ENCODE measurements at regions of chr18 and their contacts with region 1.

Region 1: GRCh38 chr18:38654946-38655345 is 1089.3 kb upstream of the CELF4 start:
- DNase-seq: no peak
- H3K4me3 ChIP-seq: no peak overlapping the region
- H3K27ac ChIP-seq: no peak overlapping the region
- H3K4me1 ChIP-seq: no peaks in the 10 kb centered on the region
- H3K27me3 ChIP-seq: no peaks in the 10 kb centered on the region
- CTCF ChIP-seq: no peak
- EP300 ChIP-seq: no peak
- POLR2A ChIP-seq: no peak

Region 2: GRCh38 chr18:38241736-38242135 is 413.2 kb before region 1 on chr18:
- in situ Hi-C with region 1: no loop called
- intact Hi-C with region 1: no loop called
- DNase-seq: no peak
- H3K4me3 ChIP-seq: no peak overlapping the region
- H3K27ac ChIP-seq: no peak overlapping the region
- H3K4me1 ChIP-seq: no peaks in the 10 kb centered on the region
- H3K27me3 ChIP-seq: no peaks in the 10 kb centered on the region
- CTCF ChIP-seq: no peak
- EP300 ChIP-seq: no peak
- POLR2A ChIP-seq: no peak

Region 3: DNA sequence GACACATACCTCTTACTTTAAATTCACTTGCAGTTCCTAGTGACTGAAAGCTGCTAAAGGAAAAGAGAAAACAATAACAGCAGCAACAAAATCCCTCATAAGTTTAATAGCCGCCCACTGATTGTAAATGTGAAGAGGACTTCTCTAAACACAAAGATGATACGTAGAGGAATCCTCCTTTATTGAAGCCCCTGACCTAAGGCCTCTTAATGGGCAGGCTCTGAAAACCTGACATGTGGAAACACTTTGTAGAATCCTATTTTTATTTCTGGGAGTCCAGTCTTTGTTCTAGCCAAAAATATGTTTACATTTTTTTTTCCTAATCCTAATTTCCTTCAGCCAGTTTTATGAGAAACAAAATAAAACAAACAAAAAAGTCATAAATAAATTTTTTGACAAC is 188.3 kb after region 1 on chr18:
- in situ Hi-C with region 1: no loop called
- intact Hi-C with region 1: no loop called
- DNase-seq: no peak
- H3K4me3 ChIP-seq: no peak overlapping the region
- H3K27ac ChIP-seq: no peak overlapping the region
- H3K4me1 ChIP-seq: no peaks in the 10 kb centered on the region
- H3K27me3 ChIP-seq: no peaks in the 10 kb centered on the region
- CTCF ChIP-seq: no peak
- EP300 ChIP-seq: no peak
- POLR2A ChIP-seq: no peak

Region 4: GRCh38 chr18:39414009-39414700 is 759.2 kb after region 1 on chr18:
- in situ Hi-C with region 1: no loop called
- intact Hi-C with region 1: loop called (anchors 10 kb)
- DNase-seq: no peak
- H3K4me3 ChIP-seq: no peak overlapping the region
- H3K27ac ChIP-seq: no peak overlapping the region
- H3K4me1 ChIP-seq: no peaks in the 10 kb centered on the region
- H3K27me3 ChIP-seq: no peaks in the 10 kb centered on the region
- CTCF ChIP-seq: no peak
- EP300 ChIP-seq: no peak
- POLR2A ChIP-seq: no peak

Measured in transverse colon (tissue), 4 donors.